Endothelial cell of umbilical vein (primary cell): ENCODE measurements at regions of chr16 and their contacts with region 1.

Region 1: DNA sequence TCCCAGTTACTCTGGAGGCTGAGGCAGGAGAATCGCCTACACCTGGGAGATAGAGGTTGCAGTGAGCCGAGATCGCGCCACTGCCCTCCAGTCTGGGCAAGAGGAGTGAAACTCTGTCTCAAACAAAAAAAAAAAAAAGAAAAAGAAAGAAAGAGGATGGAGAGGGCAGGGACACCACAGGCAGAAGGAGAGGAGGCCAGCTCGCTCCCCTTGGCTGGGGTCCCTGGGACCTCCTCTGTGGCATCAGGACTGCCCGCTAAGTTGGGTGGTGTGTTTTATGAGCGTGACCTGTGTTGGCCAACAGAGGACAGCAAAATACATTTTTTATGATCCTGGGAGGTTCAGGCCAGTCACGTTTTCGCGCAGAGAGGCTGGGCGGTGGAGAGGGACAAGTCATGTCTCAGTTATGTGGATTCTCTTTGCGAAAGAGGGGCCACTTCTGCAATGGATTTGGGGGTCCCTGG is 229.6 kb downstream of the MRTFB start:
- DNase-seq: peak; percentile 78
- H3K4me3 ChIP-seq: no peak overlapping the region
- H3K27ac ChIP-seq: no peak overlapping the region
- H3K4me1 ChIP-seq: peaks cover 10% of the 10 kb centered on the region
- H3K27me3 ChIP-seq: no peaks in the 10 kb centered on the region
- CTCF ChIP-seq: peak; percentile 43 to 70
- POLR2A ChIP-seq: no peak

Region 2: GRCh38 chr16:14164916-14165662 is 135.6 kb before region 1 on chr16:
- CTCF ChIA-PET with region 1: no interaction called
- POLR2A ChIA-PET with region 1: no interaction called
- dilution Hi-C with region 1: no loop called
- intact Hi-C with region 1: no loop called
- DNase-seq: no peak
- H3K4me3 ChIP-seq: no peak overlapping the region
- H3K27ac ChIP-seq: no peak overlapping the region
- H3K4me1 ChIP-seq: no peaks in the 10 kb centered on the region
- H3K27me3 ChIP-seq: no peaks in the 10 kb centered on the region
- CTCF ChIP-seq: no peak
- POLR2A ChIP-seq: no peak

Region 3: GRCh38 chr16:14486520-14487303 is 186.0 kb after region 1 on chr16:
- CTCF ChIA-PET with region 1: interaction called, 4 read pairs
- POLR2A ChIA-PET with region 1: no interaction called
- dilution Hi-C with region 1: no loop called
- intact Hi-C with region 1: loop called (anchors 2 kb)
- DNase-seq: peak; percentile 91
- H3K4me3 ChIP-seq: peak overlapping the region in 2 of 3 experiments; percentile 9 to 13
- H3K27ac ChIP-seq: peak overlapping the region; percentile 55
- H3K4me1 ChIP-seq: peaks cover 28% of the 10 kb centered on the region
- H3K27me3 ChIP-seq: no peaks in the 10 kb centered on the region
- CTCF ChIP-seq: no peak
- POLR2A ChIP-seq: no peak

Region 4: GRCh38 chr16:14600164-14600563 is 299.4 kb after region 1 on chr16:
- CTCF ChIA-PET with region 1: interaction called, 3 read pairs
- POLR2A ChIA-PET with region 1: no interaction called
- dilution Hi-C with region 1: no loop called
- intact Hi-C with region 1: loop called (anchors 1 kb)
- DNase-seq: peak; percentile 54
- H3K4me3 ChIP-seq: no peak overlapping the region
- H3K27ac ChIP-seq: no peak overlapping the region
- H3K4me1 ChIP-seq: no peaks in the 10 kb centered on the region
- H3K27me3 ChIP-seq: no peaks in the 10 kb centered on the region
- CTCF ChIP-seq: peak; percentile 17 to 29
- POLR2A ChIP-seq: no peak

Region 5: GRCh38 chr16:15865742-15866141 is 1565.0 kb after region 1 on chr16:
- CTCF ChIA-PET with region 1: no interaction called
- POLR2A ChIA-PET with region 1: no interaction called
- dilution Hi-C with region 1: no loop called
- intact Hi-C with region 1: no loop called
- DNase-seq: no peak
- H3K4me3 ChIP-seq: no peak overlapping the region
- H3K27ac ChIP-seq: no peak overlapping the region
- H3K4me1 ChIP-seq: no peaks in the 10 kb centered on the region
- H3K27me3 ChIP-seq: no peaks in the 10 kb centered on the region
- CTCF ChIP-seq: no peak
- POLR2A ChIP-seq: no peak